Breast epithelium (tissue), 4 donors: ENCODE measurements at regions of chr3 and their contacts with region 1.

Region 1: DNA sequence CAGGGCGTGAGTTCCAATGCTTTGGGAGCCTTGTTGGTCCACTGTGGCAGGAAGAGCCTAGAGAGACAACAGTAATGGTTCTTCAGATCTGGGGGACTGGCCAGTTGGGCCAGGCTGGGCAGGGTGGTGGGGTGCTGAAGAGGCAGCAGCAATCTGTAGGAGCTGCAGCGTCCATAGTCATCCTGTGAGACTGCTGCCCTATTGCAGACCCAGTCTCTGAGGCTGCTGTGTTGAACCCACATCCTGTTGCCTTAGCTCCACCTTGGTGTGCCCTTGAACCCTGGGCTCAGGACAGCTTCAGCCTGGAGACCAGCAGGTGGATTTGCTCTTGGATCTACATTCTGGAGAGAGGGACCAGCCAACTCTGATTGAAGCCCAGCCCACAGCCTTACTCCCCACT is 23.6 kb upstream of the ETV5 start:
- DNase-seq: no peak
- H3K4me3 ChIP-seq: no peak overlapping the region
- H3K27ac ChIP-seq: no peak overlapping the region
- H3K4me1 ChIP-seq: no peaks in the 10 kb centered on the region
- H3K27me3 ChIP-seq: no peaks in the 10 kb centered on the region
- CTCF ChIP-seq: no peak
- POLR2A ChIP-seq: no peak

Region 2: GRCh38 chr3:186444974-186445373 is 312.5 kb after region 1 on chr3:
- intact Hi-C with region 1: loop called (anchors 5 kb)
- DNase-seq: no peak
- H3K4me3 ChIP-seq: no peak overlapping the region
- H3K27ac ChIP-seq: no peak overlapping the region
- H3K4me1 ChIP-seq: no peaks in the 10 kb centered on the region
- H3K27me3 ChIP-seq: no peaks in the 10 kb centered on the region
- CTCF ChIP-seq: no peak
- POLR2A ChIP-seq: no peak